GM13976 (cell line): ENCODE measurements at regions of chr6 and their contacts with region 1.

Region 1: GRCh38 chr6:31366693-31367470 is 9.9 kb upstream of the HLA-B start:
- DNase-seq: peak; percentile 82
- CTCF ChIP-seq: peak; percentile 85

Region 2: DNA sequence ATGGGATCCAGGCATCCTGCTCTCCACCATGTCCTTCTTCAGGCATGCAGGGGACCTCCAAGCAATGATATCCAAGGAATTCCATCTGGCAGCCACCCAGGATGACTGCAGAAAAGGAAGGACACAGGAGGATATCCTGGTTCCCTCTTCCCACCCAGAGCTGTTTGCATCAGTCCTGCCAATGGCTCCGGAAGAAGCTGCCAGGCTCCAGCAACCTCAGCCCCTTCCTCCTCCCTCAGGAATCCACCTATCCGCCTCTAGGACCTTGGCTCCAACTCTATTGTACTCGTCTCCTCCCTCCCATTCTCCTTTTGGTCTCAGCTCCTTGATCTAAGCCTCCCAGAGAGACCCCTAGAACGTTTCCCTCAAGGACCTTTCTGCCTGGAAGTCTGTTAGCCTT is 227.3 kb before region 1 on chr6:
- in situ Hi-C with region 1: loop called (anchors 5 kb)
- DNase-seq: no peak
- CTCF ChIP-seq: no peak

Region 3: DNA sequence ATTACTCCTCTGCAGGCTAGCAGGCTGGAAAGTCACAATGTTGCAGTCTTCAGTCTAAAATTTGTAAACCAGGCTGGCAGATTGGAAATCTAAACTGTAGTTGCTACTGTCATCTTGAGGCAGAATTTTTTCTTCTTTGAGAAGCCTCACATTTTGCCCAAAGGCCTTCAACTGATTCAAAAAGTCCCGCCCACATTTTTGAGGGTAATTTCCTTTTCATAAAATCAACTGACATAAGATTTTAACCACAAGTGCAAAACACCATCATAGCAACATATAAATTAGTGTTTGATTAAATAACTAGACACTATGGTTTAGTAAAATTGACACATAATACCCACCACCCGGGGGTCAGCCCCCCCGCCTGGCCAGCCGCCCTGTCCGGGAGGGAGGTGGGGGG is 123.4 kb before region 1 on chr6:
- in situ Hi-C with region 1: no loop called
- DNase-seq: no peak
- CTCF ChIP-seq: no peak